Stomach (tissue), 19 donors: ENCODE measurements at regions of chr16 and their contacts with region 1.

Region 1: GRCh38 chr16:51685498-51685897 is 534.4 kb upstream of the SALL1 start:
- DNase-seq: no peak
- H3K4me3 ChIP-seq: no peak overlapping the region
- H3K27ac ChIP-seq: no peak overlapping the region
- H3K4me1 ChIP-seq: no peaks in the 10 kb centered on the region
- H3K27me3 ChIP-seq: no peaks in the 10 kb centered on the region
- CTCF ChIP-seq: no peak
- EP300 ChIP-seq: no peak
- POLR2A ChIP-seq: no peak

Region 2: GRCh38 chr16:51636920-51637769 is 48.4 kb before region 1 on chr16:
- intact Hi-C with region 1: loop called (anchors 5 kb)
- DNase-seq: no peak
- H3K4me3 ChIP-seq: no peak overlapping the region
- H3K27ac ChIP-seq: no peak overlapping the region
- H3K4me1 ChIP-seq: no peaks in the 10 kb centered on the region
- H3K27me3 ChIP-seq: peaks cover 0 to 17% (median 0%) of the 10 kb centered on the region in 3 donors
- CTCF ChIP-seq: no peak
- EP300 ChIP-seq: no peak
- POLR2A ChIP-seq: no peak